B cell (primary cell): ENCODE measurements at regions of chr1 and their contacts with region 1.

Region 1: GRCh38 chr1:242797856-242798255 is 273.4 kb upstream of the PLD5 start:
- DNase-seq: no peak
- ATAC-seq: no peak
- H3K4me3 ChIP-seq: no peak overlapping the region
- H3K4me3 Mint-ChIP-seq: no peak overlapping the region
- H3K27ac ChIP-seq: no peak overlapping the region
- H3K27ac Mint-ChIP-seq: no peak overlapping the region
- H3K4me1 ChIP-seq: no peaks in the 10 kb centered on the region
- H3K4me1 Mint-ChIP-seq: no peaks in the 10 kb centered on the region
- H3K27me3 ChIP-seq: peaks cover 0 to 3% (median 0%) of the 10 kb centered on the region in 4 experiments
- H3K27me3 Mint-ChIP-seq: peaks cover 6% of the 10 kb centered on the region
- CTCF ChIP-seq: no peak

Region 2: GRCh38 chr1:242467556-242468145 is 330.2 kb before region 1 on chr1:
- CTCF ChIA-PET with region 1: interaction called, 3 read pairs
- POLR2A ChIA-PET with region 1: no interaction called
- intact Hi-C with region 1: loop called (anchors 5 kb)
- DNase-seq: peak; percentile 53
- ATAC-seq: peak; percentile 14
- H3K4me3 ChIP-seq: no peak overlapping the region
- H3K4me3 Mint-ChIP-seq: no peak overlapping the region
- H3K27ac ChIP-seq: no peak overlapping the region
- H3K27ac Mint-ChIP-seq: no peak overlapping the region
- H3K4me1 ChIP-seq: no peaks in the 10 kb centered on the region
- H3K4me1 Mint-ChIP-seq: no peaks in the 10 kb centered on the region
- H3K27me3 ChIP-seq: peaks cover 0 to 3% (median 0%) of the 10 kb centered on the region in 4 experiments
- H3K27me3 Mint-ChIP-seq: peaks cover 22% of the 10 kb centered on the region
- CTCF ChIP-seq: peak; percentile 80

Region 3: DNA sequence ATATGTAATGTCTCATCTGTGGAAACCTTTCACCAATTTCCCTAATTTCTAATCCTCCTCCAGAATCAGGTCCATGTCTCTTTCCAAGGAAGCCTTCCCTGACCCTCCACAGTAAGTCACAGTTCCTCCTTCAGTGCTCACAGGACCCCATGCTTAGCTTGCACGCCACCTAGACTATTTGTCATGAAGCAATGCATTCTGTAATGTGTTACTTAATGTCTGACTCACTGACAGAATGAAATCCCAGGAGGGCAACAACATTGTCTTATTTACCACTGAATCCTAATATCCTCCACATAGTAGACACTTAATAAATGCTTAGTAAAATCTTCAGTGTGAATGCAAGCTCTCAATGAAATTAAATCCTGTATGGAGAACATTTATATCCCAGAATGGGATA is 27.5 kb before region 1 on chr1:
- CTCF ChIA-PET with region 1: no interaction called
- POLR2A ChIA-PET with region 1: no interaction called
- intact Hi-C with region 1: no loop called
- DNase-seq: no peak
- ATAC-seq: no peak
- H3K4me3 ChIP-seq: no peak overlapping the region
- H3K4me3 Mint-ChIP-seq: no peak overlapping the region
- H3K27ac ChIP-seq: no peak overlapping the region
- H3K27ac Mint-ChIP-seq: no peak overlapping the region
- H3K4me1 ChIP-seq: no peaks in the 10 kb centered on the region
- H3K4me1 Mint-ChIP-seq: no peaks in the 10 kb centered on the region
- H3K27me3 ChIP-seq: no peaks in the 10 kb centered on the region
- H3K27me3 Mint-ChIP-seq: no peaks in the 10 kb centered on the region
- CTCF ChIP-seq: no peak